Calu3 (cell line): ENCODE measurements at regions of chr15 and their contacts with region 1.

Region 1: GRCh38 chr15:74692327-74692726 is 3.5 kb downstream of the EDC3 start:
- DNase-seq: no peak
- H3K4me3 Mint-ChIP-seq: no peak overlapping the region
- H3K27ac Mint-ChIP-seq: no peak overlapping the region
- H3K4me1 Mint-ChIP-seq: peaks cover 10% of the 10 kb centered on the region
- H3K27me3 Mint-ChIP-seq: no peaks in the 10 kb centered on the region
- CTCF ChIP-seq: no peak

Region 2: GRCh38 chr15:74642729-74643367 is 49.5 kb before region 1 on chr15:
- CTCF ChIA-PET with region 1: no interaction called
- intact Hi-C with region 1: loop called (anchors 5 kb)
- DNase-seq: peak; percentile 38
- H3K4me3 Mint-ChIP-seq: peak overlapping the region; percentile 33
- H3K27ac Mint-ChIP-seq: peak overlapping the region; percentile 46
- H3K4me1 Mint-ChIP-seq: peaks cover 29% of the 10 kb centered on the region
- H3K27me3 Mint-ChIP-seq: no peaks in the 10 kb centered on the region
- CTCF ChIP-seq: no peak

Region 3: DNA sequence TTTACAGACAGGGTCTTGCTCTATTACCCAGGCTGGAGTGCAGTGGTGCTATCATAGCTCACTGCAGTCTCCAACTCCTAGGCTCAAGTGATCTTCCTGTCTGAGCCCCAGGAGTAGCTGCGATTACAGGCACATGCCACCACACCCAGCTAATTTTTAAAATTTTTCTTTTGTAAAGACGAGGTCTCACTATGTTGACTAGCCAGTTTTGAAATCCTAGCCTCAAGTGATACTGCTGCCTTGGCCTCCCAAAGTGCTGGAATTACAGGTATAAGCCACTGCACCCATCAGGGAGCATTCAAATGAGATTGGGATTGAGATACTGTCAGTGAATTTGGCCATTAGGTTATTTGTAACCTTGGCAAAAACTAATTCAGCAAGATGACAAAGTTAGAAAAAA is 18.2 kb before region 1 on chr15:
- CTCF ChIA-PET with region 1: no interaction called
- intact Hi-C with region 1: no loop called
- DNase-seq: no peak
- H3K4me3 Mint-ChIP-seq: no peak overlapping the region
- H3K27ac Mint-ChIP-seq: no peak overlapping the region
- H3K4me1 Mint-ChIP-seq: no peaks in the 10 kb centered on the region
- H3K27me3 Mint-ChIP-seq: no peaks in the 10 kb centered on the region
- CTCF ChIP-seq: no peak

Region 4: GRCh38 chr15:74787251-74788041 is 95.1 kb after region 1 on chr15:
- CTCF ChIA-PET with region 1: no interaction called
- intact Hi-C with region 1: no loop called
- DNase-seq: peak; percentile 54
- H3K4me3 Mint-ChIP-seq: no peak overlapping the region
- H3K27ac Mint-ChIP-seq: peak overlapping the region; percentile 14
- H3K4me1 Mint-ChIP-seq: peaks cover 60% of the 10 kb centered on the region
- H3K27me3 Mint-ChIP-seq: no peaks in the 10 kb centered on the region
- CTCF ChIP-seq: peak; percentile 46